Tibial artery (tissue), 4 donors: ENCODE measurements at regions of chr17 and their contacts with region 1.

Region 1: GRCh38 chr17:16453493-16453851 is 38.1 kb downstream of the TRPV2 start:
- DNase-seq: no peak
- H3K4me3 ChIP-seq: no peak overlapping the region
- H3K27ac ChIP-seq: no peak overlapping the region
- H3K4me1 ChIP-seq: no peaks in the 10 kb centered on the region
- H3K27me3 ChIP-seq: no peaks in the 10 kb centered on the region
- CTCF ChIP-seq: no peak

Region 2: DNA sequence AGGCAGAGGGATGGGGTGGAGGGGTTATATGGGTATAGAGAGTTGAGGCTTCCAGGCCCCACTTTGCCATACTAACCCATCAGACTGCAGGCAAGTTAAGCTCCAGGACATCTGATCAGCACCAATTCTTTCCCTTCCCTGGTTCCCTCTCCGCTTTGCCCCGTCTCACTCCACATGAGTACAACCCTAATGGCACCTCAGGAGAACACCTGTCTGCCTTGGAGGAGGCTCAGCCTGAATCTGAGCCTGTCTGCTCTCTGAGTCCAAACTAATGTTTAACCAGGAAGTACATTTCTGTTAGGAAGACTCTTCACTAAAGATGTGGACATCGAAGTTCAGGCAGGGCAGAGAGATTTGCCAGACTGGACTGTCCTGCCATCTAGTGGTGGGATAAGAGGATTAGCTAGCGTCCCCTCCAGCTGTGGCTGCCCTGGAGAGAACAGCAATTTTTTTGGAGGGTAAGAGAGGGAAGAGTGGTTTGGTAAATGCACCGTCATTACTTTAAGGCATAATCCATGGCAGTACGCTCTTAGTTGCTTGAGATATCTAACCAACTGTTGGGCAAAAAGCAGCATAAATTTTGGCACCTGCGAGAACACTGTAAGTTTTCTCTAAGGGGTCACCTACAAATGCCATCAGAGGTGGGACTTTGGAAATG is 67.7 kb after region 1 on chr17:
- intact Hi-C with region 1: loop called (anchors 2 kb)
- DNase-seq: peak; percentile 57 to 85
- H3K4me3 ChIP-seq: no peak overlapping the region
- H3K27ac ChIP-seq: no peak overlapping the region
- H3K4me1 ChIP-seq: peaks cover 0 to 21% (median 11%) of the 10 kb centered on the region in 4 donors
- H3K27me3 ChIP-seq: peaks cover 0 to 12% of the 10 kb centered on the region in 2 donors
- CTCF ChIP-seq: peak; percentile 87 to 93